ENCODE measurements at regions of chr13 and their contacts with region 1.

Region 1: DNA sequence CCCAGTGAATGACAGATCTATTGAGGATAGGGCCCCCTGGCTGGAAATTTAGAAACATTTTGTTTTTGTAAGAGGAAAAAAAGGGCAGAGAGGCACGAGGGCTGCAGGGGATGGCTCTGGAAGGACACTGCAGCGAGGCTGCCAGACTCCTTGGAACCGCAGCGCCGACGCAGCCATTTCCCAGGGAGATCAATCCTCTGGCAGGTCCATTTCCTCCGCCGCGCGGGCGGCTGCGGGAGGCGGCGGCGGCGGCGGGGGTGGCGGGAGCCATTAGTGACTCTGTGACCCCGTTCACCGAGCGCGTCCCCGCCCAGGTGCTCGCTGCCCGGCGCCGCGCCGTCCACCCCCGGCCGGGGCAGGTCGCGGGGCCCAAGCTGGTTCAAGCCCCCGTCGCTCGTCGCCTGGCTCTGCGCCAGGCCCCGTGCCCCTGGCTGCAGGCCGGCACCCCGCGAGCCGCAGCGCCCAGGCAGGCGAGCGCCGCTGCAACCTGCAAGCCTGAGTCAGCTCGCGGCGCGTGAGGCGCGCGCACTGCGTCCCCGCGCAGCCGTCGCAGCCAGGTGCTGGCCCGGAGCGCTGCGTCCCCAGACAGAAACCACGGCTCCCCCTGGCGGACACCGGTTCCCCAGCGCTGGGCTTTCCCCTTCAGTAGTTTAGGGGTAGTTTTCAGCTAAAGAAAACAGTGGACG is 192.6 kb downstream of the KATNAL1 start:
- DNase-seq: peak; percentile 91
- H3K4me3 ChIP-seq: peak overlapping the region; percentile 63
- H3K27ac ChIP-seq: peak overlapping the region; percentile 65
- H3K4me1 ChIP-seq: peaks cover 33% of the 10 kb centered on the region
- H3K27me3 ChIP-seq: no peaks in the 10 kb centered on the region
- CTCF ChIP-seq: peak; percentile 94

Region 2: DNA sequence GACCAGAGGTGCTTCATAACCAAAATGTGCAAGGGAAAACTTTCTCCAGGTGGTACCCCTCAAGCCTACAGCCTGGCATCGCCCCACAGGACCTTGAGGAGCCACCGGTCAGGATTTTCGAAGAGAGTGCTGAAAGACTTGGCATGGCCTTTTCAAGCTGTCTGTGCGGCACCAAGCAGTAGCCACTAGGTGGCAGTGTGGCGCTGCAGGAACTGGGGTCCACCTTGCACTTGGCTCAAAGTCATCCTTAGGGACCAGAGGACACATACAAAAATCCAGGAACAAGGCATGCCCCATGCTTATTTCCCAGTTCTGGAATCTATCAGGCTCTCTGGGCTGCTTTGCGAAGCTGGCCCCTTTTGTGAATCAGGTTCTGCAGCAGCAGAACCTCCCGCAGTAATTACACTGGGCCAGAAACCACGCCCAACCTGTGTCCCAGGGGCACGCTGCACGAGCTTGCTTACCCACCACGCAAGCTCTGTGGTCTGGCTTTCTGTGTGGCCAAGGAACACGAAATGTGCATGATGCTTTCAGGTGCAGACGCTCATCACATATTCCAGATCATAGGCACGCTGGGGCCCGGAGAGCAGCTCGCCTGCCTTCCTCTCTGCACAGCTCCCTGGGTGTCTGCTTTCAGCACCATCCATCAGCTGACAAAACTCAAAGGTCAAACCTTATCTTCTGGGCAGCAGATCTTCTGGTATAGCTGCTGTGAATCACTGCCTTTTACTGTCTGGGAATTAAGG is 606.4 kb before region 1 on chr13:
- CTCF ChIA-PET with region 1: interaction called, 10 read pairs
- POLR2A ChIA-PET with region 1: no interaction called
- intact Hi-C with region 1: loop called (anchors 2 kb)
- DNase-seq: peak; percentile 85
- H3K4me3 ChIP-seq: no peak overlapping the region
- H3K27ac ChIP-seq: no peak overlapping the region
- H3K4me1 ChIP-seq: no peaks in the 10 kb centered on the region
- H3K27me3 ChIP-seq: no peaks in the 10 kb centered on the region
- CTCF ChIP-seq: peak; percentile 97

Region 3: GRCh38 chr13:29771247-29771646 is 343.5 kb before region 1 on chr13:
- CTCF ChIA-PET with region 1: interaction called, 27 read pairs
- POLR2A ChIA-PET with region 1: no interaction called
- intact Hi-C with region 1: loop called (anchors 1 kb)
- DNase-seq: peak; percentile 49
- H3K4me3 ChIP-seq: no peak overlapping the region
- H3K27ac ChIP-seq: no peak overlapping the region
- H3K4me1 ChIP-seq: no peaks in the 10 kb centered on the region
- H3K27me3 ChIP-seq: no peaks in the 10 kb centered on the region
- CTCF ChIP-seq: peak; percentile 60

Region 4: DNA sequence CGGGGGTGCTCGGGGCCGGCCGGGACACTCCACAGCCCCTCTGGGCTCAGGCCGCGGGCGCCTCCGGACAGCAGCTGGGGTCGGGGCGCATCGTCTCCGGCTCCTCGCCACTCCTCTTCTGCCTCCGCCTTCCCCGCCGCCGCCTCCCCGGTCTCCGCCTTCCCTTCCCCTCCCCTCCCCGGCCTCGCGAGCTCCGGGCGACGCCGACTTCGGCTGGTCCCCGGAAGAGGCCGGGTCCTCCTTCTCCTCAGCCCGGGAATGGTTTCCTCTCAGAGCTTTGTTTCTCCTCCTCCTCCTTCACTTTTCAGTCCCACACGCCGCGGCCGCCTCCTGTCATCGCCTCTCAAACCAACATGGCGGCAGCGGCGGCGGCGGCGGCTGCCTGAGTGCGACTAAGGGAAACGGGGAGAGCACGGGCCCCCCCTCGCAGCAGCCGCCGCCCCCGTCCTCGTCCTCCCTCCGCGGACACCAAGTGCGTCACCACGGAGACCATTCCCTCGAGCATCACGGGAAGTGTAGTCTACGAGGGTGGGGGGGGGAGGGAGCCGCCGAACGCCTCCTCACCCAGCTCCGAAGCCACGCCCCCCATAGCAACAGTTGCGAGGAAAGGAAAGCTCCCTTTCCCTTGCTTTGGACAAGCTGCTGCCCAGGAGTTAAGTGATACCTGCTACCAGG is 264.4 kb before region 1 on chr13 and contains the start of gene UBL3:
- CTCF ChIA-PET with region 1: interaction called, 4 read pairs
- POLR2A ChIA-PET with region 1: no interaction called
- intact Hi-C with region 1: loop called (anchors 1 kb)
- DNase-seq: peak; percentile 98
- H3K4me3 ChIP-seq: peak within 1 kb of the TSS; percentile 74
- H3K27ac ChIP-seq: peak within 1 kb of the TSS; percentile 90
- H3K4me1 ChIP-seq: peaks cover 14% of the 10 kb centered on the region
- H3K27me3 ChIP-seq: no peaks in the 10 kb centered on the region
- CTCF ChIP-seq: no peak
- total RNA-seq, gene UBL3: 12.0 and 13.0 TPM in 2 replicates

Region 5: DNA sequence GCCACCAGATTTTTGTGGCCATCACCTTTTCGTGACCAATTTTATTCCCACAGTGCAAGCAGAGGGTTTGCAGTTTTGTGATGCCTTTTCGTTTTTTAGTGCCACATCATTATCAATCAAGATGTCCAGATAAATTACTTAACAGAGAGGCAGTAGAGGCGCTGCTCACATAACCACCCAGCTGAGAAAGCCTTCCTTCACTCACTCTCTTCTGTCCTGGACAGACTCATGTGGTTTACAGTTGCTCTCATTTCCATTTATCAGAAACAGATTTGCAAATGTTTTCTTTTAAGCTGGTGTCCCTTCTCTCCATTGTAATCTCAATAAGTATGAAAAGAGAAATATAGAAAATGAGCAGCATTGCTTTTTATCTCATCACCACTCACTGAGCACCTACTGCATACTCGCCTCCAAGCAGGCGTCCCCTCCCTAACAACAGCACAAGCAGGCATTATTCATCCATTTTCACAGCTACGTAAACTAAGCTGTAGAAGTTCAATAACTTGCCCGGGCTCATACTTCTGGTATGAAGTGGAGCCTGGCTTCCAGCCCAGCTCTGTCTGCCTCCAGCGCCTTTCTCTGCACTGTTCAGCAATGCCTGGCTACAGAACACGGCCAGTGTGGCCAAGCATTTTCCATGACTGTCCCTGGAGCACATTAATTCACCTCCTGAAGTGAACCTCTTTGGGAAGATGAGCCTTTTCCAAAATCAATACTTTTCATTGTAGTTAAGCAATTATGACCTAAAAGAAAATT is 227.3 kb after region 1 on chr13:
- CTCF ChIA-PET with region 1: no interaction called
- POLR2A ChIA-PET with region 1: no interaction called
- intact Hi-C with region 1: no loop called
- DNase-seq: peak; percentile 65
- H3K4me3 ChIP-seq: no peak overlapping the region
- H3K27ac ChIP-seq: peak overlapping the region; percentile 68
- H3K4me1 ChIP-seq: peaks cover 31% of the 10 kb centered on the region
- H3K27me3 ChIP-seq: no peaks in the 10 kb centered on the region
- CTCF ChIP-seq: no peak

Region 6: GRCh38 chr13:30355384-30355699 is 240.6 kb after region 1 on chr13:
- CTCF ChIA-PET with region 1: interaction called, 15 read pairs
- POLR2A ChIA-PET with region 1: no interaction called
- intact Hi-C with region 1: no loop called
- DNase-seq: no peak
- H3K4me3 ChIP-seq: no peak overlapping the region
- H3K27ac ChIP-seq: no peak overlapping the region
- H3K4me1 ChIP-seq: peaks cover 10% of the 10 kb centered on the region
- H3K27me3 ChIP-seq: no peaks in the 10 kb centered on the region
- CTCF ChIP-seq: no peak

Measured in A673 (cell line).